Activated CD8-positive, alpha-beta T cell treated with anti-CD3 and anti-CD28 coated beads, Interleukin-2, amount 10 ng/mL, durations not matched to agents 7 days and 5 days (primary cell): ENCODE measurements at regions of chr7 and their contacts with region 1.

Region 1: GRCh38 chr7:157250605-157251228 is 86.1 kb upstream of the DNAJB6 start:
- DNase-seq: peak; percentile 69
- ATAC-seq: peak; percentile 70
- H3K4me3 Mint-ChIP-seq: no peak overlapping the region
- H3K27ac Mint-ChIP-seq: no peak overlapping the region
- H3K4me1 Mint-ChIP-seq: no peaks in the 10 kb centered on the region
- H3K27me3 Mint-ChIP-seq: no peaks in the 10 kb centered on the region

Region 2: DNA sequence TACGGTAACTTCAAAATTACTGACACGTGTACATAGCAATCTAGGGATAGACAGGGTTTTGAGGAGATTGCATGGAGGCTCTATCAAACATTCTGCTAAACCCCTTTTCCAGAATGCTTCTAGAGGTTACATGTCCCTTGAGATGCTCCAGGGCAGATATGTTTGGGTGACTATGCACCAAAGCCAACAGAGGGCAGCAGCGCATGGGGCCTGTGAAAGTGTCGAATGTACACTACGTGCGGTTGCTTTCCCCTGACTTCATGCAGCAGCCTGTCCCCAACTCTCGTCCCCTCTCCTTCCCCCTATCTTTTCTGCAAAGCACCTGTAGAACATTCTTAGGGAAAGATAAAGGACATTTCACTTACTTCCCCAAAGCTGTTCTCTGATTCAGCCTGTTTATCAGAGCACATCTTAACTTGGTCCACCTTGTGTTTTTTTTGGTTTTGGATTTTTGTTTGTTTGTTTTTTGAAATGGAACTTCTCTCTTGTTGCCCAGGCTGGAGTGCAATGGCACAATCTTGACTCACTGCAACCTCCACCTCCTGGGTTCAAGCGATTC is 21.8 kb before region 1 on chr7:
- CTCF ChIA-PET with region 1: interaction called, 10 read pairs
- POLR2A ChIA-PET with region 1: no interaction called
- DNase-seq: peak; percentile 45
- ATAC-seq: peak; percentile 49
- H3K4me3 Mint-ChIP-seq: no peak overlapping the region
- H3K27ac Mint-ChIP-seq: no peak overlapping the region
- H3K4me1 Mint-ChIP-seq: no peaks in the 10 kb centered on the region
- H3K27me3 Mint-ChIP-seq: no peaks in the 10 kb centered on the region

Region 3: GRCh38 chr7:157239571-157240270 is 11.0 kb before region 1 on chr7:
- CTCF ChIA-PET with region 1: interaction called, 11 read pairs
- POLR2A ChIA-PET with region 1: no interaction called
- DNase-seq: no peak
- ATAC-seq: no peak
- H3K4me3 Mint-ChIP-seq: no peak overlapping the region
- H3K27ac Mint-ChIP-seq: no peak overlapping the region
- H3K4me1 Mint-ChIP-seq: no peaks in the 10 kb centered on the region
- H3K27me3 Mint-ChIP-seq: no peaks in the 10 kb centered on the region

Region 4: DNA sequence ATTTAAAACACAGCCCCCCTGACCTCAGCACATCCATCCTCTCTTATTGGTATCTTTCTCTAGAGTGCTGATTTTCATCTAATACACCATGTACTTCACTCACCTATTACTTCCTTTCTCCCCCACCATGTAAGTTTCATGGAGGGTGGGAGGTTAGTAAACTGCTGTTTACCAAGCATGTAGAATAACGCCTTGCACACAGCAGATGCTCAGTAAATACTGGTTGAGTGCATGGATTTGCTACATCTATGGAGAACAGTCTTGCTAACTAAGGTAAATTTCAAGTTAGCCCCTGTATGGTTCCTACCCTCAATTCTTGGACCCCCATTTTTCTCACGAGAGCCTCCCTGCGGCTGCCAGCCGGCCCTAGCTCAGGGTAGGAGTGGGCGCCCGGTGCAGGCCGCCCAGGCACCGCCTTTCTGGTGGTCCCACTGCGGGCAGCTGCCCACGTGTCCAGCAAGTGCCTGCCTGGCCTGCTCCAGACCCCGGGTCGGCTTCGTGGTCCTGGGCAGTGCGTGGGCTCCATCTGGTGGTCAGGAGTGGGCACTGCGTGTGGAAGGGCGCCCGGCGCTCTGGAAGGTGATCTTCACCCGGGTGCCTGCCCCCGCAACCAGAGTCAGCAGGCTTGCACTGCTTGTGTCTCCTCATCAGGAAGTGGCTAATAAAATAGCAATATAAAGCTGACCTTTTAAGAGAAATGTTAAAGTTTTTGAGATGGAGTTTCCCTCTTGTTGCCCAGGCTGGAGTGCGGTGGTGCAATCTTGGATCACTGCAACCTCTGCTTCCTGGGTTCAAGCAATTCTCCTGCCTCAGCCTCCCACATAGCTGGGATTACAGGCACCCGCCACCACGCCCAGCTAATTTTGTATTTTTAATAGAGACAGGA is 22.7 kb after region 1 on chr7:
- CTCF ChIA-PET with region 1: interaction called, 11 read pairs
- POLR2A ChIA-PET with region 1: no interaction called
- DNase-seq: peak; percentile 69
- ATAC-seq: peak; percentile 56
- H3K4me3 Mint-ChIP-seq: no peak overlapping the region
- H3K27ac Mint-ChIP-seq: no peak overlapping the region
- H3K4me1 Mint-ChIP-seq: peaks cover 23% of the 10 kb centered on the region
- H3K27me3 Mint-ChIP-seq: peaks cover 2% of the 10 kb centered on the region